Gastrocnemius medialis (tissue), 4 donors: ENCODE measurements at regions of chr10 and their contacts with region 1.

Region 1: DNA sequence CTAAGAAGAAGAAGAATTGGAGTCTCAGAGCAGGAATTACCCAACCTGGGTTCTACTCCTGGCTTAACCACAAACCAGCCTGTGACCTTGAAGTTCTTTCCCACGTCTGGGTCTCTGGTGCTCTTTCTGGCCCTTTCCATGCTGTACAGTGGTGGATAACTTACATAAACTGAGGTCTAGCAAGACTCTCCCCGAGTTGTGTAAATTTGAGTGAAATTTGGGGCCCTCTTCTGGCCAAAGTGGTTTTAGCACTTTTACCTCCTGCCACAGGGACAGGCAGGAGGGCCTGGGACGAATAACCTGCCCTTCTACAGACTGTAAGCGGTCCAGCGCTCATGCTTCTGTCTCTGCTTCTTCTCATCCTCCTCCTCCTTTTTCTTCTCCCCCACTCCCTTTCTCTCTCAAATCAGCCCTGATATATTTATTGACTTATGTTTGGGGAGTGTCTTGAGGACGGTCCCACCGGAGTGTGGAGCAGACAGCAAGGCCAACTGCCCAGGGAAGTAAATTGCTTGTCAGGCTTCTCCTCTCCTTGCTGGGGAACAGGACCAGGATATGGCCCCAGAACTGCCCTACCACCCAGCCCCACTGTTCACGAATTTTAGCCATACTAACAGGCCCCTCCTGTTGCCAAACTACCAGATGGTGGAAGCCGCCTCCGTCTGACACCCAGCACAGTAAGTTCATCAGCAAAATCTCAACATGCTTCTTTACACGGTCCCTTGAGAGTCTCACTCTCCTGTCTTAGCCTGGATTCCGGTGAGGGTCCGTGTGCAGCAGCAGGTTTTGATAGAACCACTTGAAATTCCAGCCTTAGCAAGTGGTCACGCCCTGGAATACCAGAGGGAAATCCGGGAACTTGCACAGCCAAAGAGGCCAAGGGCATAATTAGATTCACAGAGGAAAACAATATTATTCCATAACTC is 4.0 kb upstream of the SH3PXD2A start:
- DNase-seq: peak; percentile 35 to 59
- ATAC-seq: peak; percentile 57 to 71
- H3K4me3 ChIP-seq: no peak overlapping the region
- H3K27ac ChIP-seq: peak overlapping the region in 1 of 4 donors; percentile 4
- H3K4me1 ChIP-seq: peaks cover 5% of the 10 kb centered on the region in 2 donors
- H3K27me3 ChIP-seq: no peaks in the 10 kb centered on the region
- CTCF ChIP-seq: peak; percentile 80 to 85 (median 83)
- POLR2A ChIP-seq: no peak

Region 2: GRCh38 chr10:103592186-103593021 is 267.0 kb before region 1 on chr10:
- in situ Hi-C with region 1: loop called in 1 of 4 experiments (anchors 25 kb)
- intact Hi-C with region 1: loop called (anchors 5 kb)
- DNase-seq: peak in 1 of 2 donors; percentile 50
- ATAC-seq: peak; percentile 51 to 63
- H3K4me3 ChIP-seq: no peak overlapping the region
- H3K27ac ChIP-seq: peak overlapping the region in 1 of 4 donors; percentile 22
- H3K4me1 ChIP-seq: peaks cover 9 to 13% of the 10 kb centered on the region in 2 donors
- H3K27me3 ChIP-seq: no peaks in the 10 kb centered on the region
- CTCF ChIP-seq: peak; percentile 55 to 78 (median 64)
- POLR2A ChIP-seq: no peak

Region 3: GRCh38 chr10:103598654-103599115 is 260.7 kb before region 1 on chr10:
- in situ Hi-C with region 1: loop called in 1 of 4 experiments (anchors 25 kb)
- intact Hi-C with region 1: loop called (anchors 5 kb)
- DNase-seq: peak; percentile 36 to 65
- ATAC-seq: peak; percentile 66 to 91
- H3K4me3 ChIP-seq: no peak overlapping the region
- H3K27ac ChIP-seq: no peak overlapping the region
- H3K4me1 ChIP-seq: peaks cover 11 to 20% of the 10 kb centered on the region in 2 donors
- H3K27me3 ChIP-seq: no peaks in the 10 kb centered on the region
- CTCF ChIP-seq: peak; percentile 64 to 85 (median 81)
- POLR2A ChIP-seq: no peak

Region 4: GRCh38 chr10:103712570-103713498 is 146.6 kb before region 1 on chr10:
- in situ Hi-C with region 1: loop called (anchors 5 kb)
- intact Hi-C with region 1: loop called (anchors 1 kb)
- DNase-seq: peak; percentile 63 to 79
- ATAC-seq: peak; percentile 81 to 94
- H3K4me3 ChIP-seq: no peak overlapping the region
- H3K27ac ChIP-seq: no peak overlapping the region
- H3K4me1 ChIP-seq: no peaks in the 10 kb centered on the region
- H3K27me3 ChIP-seq: no peaks in the 10 kb centered on the region
- CTCF ChIP-seq: peak; percentile 88 to 97 (median 93)
- POLR2A ChIP-seq: no peak

Region 5: GRCh38 chr10:103816431-103816830 is 43.0 kb before region 1 on chr10:
- in situ Hi-C with region 1: no loop called
- intact Hi-C with region 1: loop called (anchors 5 kb)
- DNase-seq: peak in 1 of 2 donors; percentile 39
- ATAC-seq: peak; percentile 37 to 80
- H3K4me3 ChIP-seq: no peak overlapping the region
- H3K27ac ChIP-seq: no peak overlapping the region
- H3K4me1 ChIP-seq: peaks cover 47 to 59% of the 10 kb centered on the region in 2 donors
- H3K27me3 ChIP-seq: no peaks in the 10 kb centered on the region
- CTCF ChIP-seq: no peak
- POLR2A ChIP-seq: no peak

Region 6: DNA sequence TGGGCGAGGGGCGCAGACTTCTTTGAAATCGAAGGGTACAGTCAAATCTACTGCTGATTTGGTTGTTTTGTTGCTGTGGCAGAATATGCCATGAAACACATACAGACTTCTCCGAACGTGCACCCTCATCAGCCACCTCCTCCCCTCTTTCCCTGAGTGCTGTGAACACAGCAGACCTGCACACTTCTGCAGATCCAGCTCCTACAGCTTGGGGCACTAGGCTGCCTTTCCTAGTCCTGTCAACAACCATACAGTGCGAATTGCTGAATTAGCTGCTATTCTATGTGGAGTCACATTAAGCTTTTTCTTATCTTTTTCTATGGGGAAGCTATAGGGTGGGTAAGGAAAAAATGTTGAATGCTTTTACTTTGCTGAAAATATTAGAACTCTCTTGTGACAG is 168.7 kb after region 1 on chr10:
- in situ Hi-C with region 1: no loop called
- intact Hi-C with region 1: no loop called
- DNase-seq: no peak
- ATAC-seq: peak in 1 of 2 donors; percentile 60
- H3K4me3 ChIP-seq: no peak overlapping the region
- H3K27ac ChIP-seq: no peak overlapping the region
- H3K4me1 ChIP-seq: peaks cover 0 to 11% of the 10 kb centered on the region in 2 donors
- H3K27me3 ChIP-seq: no peaks in the 10 kb centered on the region
- CTCF ChIP-seq: peak in 2 of 5 experiments; percentile 21 to 25
- POLR2A ChIP-seq: no peak